Head of caudate nucleus (tissue), 42 donors: ENCODE measurements at regions of chr10 and their contacts with region 1.

Region 1: DNA sequence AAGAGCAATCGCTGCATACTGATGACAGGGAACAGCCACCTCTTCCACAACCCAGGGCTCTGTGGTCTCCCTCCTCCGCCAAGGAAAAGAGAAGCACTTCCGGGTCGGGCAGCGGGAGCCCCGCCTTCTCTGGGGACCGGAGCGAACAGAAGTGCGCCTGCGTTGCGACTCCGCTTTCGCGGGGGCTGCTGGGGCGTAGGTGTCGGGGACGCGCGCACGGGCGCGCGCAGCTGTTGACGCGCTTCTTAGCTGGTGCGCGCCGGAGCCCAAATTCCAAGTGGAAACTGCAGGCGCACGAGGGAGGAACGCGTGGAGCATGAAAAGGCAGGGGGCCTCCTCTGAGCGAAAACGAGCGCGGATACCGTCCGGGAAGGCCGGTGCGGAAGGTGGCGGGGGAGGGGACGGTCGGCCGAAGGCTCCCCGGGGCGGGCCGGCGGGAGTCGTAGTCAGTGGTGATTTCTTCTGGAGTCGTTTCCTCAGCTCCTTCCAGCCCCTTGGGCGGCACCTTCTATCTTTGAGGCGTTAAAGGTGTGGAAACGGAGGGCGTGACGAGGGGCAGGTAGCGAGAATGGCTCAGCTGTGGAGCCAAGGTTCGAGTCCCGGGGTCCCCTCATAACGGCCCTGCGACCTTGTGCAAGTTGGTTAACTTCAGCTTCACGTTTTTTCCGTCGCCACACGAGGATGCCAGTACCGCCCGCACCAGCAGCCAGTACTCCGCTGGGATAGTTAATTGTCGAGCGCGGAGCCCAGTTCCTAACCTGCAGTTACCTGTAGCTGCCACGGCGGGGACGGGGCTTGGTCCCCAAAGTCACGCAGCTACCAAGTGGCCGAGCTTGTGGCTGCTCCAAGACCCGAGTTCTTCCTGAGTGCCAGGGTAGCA is at the starts of genes COX15 and CUTC:
- DNase-seq: peak; percentile 89 to 99 (median 98)

Region 2: DNA sequence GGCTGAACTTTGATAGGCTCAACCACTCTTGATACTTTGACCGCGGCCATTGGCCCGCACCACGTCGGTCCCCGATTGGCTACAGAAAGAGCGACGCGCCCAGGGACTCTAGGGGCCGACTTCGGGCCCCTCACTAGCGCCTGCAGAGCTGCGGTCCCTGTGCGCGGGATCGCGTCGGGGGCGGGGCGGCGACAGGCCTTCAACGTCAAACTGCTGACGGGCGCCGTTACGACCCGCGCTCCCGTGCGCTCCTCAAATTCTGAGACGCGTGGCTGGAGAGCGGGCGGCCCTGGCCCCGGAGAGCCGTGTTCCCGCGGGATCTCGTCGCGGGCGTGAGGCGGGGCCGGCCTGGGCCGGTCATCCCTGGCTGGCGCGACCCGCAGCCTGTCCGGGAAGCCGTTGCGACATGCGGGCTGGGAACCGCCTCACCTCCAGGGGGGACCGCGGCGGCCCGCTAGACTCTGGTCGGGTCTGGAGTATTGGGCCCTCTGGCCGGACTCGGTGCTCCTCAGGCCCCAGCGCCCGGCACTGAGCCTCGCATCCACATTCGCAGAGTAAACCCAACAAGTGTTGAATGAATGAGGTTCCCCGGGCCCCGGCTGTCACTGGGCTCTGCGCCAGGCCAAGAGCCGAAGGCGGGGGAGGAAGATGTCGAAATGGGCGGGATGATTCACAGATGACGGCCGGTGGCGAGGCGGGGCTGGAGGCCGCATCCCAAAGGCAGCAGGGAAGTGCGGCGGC is 111.4 kb before region 1 on chr10:
- intact Hi-C with region 1: loop called (anchors 5 kb)
- DNase-seq: peak; percentile 83 to 99 (median 90)